ENCODE measurements at regions of chr11 and their contacts with region 1.

Region 1: DNA sequence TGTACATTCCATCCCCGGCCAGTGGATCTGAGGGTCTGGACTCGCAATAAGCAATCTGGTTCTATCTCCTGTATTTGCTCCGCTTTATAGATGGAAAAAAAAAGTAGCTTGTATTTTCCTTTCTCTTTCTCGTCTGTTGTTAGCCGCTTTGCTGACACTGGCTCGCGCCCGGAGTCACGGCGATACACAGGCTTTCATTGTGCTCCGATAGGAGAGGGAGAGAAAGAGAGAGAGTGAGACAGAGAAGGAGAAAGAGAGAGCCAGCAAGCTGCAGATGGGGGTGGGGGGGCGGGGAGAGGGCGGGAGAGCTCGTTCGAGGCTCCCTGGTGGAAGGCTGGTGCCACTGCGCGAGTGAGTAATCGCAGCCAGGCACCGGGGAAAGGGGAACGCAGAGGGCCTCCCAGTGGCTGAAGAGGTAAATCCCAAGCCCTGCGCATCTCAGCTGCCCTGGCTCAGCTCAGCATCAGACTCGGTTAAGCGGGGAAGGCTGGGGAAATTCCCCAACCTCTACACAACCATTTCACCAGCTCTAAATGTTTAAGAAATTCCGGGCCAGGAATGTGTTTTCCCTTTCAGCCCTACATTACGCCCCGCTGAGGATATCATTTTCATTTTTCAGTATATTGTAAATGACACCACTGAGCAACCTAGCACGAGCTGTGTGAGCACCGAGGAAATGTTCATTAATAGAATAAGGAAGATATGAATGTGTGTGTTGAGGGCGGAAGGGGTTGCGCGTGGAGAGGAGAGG is at the start of gene MAML2:
- DNase-seq: peak; percentile 94
- ATAC-seq: peak; percentile 91 to 94
- total RNA-seq, gene MAML2: 6.8 to 9.3 TPM

Region 2: GRCh38 chr11:95849087-95849825 is 493.9 kb before region 1 on chr11:
- intact Hi-C with region 1: loop called in 1 of 2 experiments (anchors 5 kb)
- DNase-seq: peak; percentile 38
- ATAC-seq: peak; percentile 93 to 96

Region 3: DNA sequence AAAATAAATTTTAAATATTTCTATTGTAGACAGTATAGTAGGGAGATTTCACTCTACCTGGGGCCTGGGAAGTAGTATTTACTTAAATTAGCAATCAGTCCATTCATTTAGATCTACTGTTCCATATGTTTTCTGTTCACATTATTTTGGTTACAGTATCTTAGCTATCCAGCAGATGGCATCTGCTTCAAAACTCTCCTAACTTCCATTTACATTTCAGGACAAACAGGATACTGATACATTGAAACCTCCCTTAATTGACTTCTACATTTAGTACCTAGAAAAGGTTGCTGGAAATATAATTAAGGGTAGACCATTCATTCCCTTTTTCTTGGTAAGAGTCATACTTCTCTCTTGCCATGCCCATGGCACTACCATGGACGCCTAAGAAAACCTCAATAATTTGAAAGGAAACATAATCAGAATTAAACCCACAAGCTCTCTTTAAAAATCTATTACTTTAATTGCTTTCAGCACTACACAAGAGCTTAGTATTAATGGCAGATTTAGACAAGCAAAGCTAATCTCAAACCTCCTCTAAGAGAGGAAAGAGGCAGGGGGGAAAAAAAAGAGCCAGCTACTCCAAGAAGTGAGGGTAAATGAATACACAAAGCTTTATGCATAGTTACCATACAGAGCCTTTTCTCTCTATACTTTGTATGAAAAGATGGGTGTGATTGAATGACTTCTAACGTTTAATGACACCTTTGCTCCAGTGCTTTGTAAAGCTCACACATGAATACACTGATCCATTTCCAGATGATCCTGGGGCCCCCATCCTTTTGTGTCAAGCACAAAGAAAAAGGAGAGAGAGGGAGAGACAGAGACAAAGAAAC is 288.0 kb before region 1 on chr11:
- intact Hi-C with region 1: loop called (anchors 2 to 5 kb)
- DNase-seq: no peak
- ATAC-seq: peak; percentile 58 to 62

Region 4: GRCh38 chr11:96162816-96163499 is 180.2 kb before region 1 on chr11:
- intact Hi-C with region 1: loop called in 1 of 2 experiments (anchors 5 kb)
- DNase-seq: peak; percentile 42
- ATAC-seq: peak; percentile 87 to 90

Region 5: DNA sequence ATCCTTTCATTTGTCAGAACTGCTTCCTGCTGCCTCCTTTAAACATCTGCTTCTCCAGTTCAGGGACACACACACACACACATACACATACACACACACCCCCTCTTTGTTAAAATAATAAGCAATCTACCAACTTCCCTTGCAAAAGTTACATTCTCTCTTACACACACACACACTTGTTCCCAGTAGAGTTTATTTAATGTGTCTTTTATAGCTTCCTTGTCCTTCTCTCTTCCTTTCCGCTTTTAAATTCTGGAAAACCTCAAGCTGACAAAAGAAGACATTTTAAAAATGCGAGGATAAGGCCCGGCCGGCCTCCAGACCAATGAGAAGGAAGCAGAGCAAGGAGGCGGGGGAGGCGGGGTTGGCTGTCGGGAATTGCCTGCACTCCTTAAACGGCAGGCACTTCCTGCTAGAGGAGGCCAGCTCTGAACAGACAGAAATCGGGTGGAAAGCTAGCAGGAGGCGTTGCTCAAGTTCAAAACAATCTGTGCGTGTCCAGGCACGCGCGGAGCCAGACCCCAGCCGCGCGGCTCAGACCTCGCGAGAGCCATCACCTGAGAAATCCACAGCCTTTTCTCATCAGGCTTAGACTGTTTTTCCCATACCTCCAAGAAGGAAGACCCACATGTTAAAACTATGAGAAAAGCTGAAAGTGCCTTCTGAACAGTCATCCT is 100.0 kb before region 1 on chr11:
- intact Hi-C with region 1: loop called in 1 of 2 experiments (anchors 2 kb)
- DNase-seq: peak; percentile 97
- ATAC-seq: peak; percentile 99

Region 6: DNA sequence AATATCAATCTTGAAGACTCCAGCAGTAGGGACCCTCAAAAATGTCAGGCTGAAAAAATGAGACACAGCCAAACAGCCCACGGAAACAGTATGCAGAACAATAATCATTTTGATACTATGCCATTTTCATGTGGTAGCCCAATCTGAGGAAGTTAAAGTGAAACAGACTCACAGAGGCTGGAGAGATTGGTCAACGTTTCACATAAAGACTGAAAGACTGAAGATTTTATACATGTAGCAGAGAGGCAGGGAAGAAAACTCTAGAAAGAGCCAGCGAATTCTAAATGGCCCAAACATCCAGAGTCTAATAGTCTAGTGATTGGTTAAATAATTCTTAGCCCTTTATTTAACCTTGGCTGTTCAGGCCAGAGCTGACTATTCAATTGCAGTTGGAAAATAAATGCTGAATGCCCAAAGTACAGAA is 49.5 kb before region 1 on chr11:
- intact Hi-C with region 1: no loop called
- DNase-seq: no peak
- ATAC-seq: peak; percentile 27 to 47

Region 7: GRCh38 chr11:96306933-96307775 is 36.0 kb before region 1 on chr11:
- intact Hi-C with region 1: loop called in 1 of 2 experiments (anchors 5 kb)
- DNase-seq: peak; percentile 92
- ATAC-seq: peak; percentile 93 to 95